ENCODE measurements at regions of chr3 and their contacts with region 1.

Region 1: GRCh38 chr3:150763122-150763841 is at the start of gene SIAH2:
- DNase-seq: peak; percentile 78
- H3K4me3 ChIP-seq: peak within 1 kb of the TSS; percentile 59
- H3K27me3 ChIP-seq: no peaks in the 10 kb centered on the region
- CTCF ChIP-seq: no peak
- polyA plus RNA-seq, gene SIAH2: 34.2 and 39.3 TPM in 2 replicates

Region 2: DNA sequence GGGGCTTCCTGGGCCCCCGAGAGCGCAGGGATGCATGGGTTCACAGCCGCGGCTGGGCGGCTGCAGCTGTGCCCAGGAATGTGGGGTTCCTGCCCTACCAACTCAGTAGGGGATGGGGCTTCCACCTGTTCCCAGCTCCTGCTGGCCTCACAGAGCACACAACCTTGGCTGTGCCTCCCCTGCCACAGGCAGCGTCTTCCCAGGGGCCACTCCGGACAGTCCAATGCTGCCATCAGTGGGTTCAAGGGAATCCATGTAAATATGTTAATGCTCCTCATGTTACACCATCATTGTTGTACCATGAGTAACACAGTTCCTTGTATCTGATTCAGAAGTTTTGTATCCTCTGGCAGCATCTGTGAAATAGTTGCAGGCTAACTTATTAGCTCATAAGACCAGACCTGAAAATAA is 11.8 kb after region 1 on chr3:
- CTCF ChIA-PET with region 1: interaction called, 36 read pairs
- POLR2A ChIA-PET with region 1: no interaction called
- DNase-seq: no peak
- H3K4me3 ChIP-seq: no peak overlapping the region
- H3K27me3 ChIP-seq: no peaks in the 10 kb centered on the region
- CTCF ChIP-seq: no peak